ENCODE measurements at regions of chr11 and their contacts with region 1.

Region 1: DNA sequence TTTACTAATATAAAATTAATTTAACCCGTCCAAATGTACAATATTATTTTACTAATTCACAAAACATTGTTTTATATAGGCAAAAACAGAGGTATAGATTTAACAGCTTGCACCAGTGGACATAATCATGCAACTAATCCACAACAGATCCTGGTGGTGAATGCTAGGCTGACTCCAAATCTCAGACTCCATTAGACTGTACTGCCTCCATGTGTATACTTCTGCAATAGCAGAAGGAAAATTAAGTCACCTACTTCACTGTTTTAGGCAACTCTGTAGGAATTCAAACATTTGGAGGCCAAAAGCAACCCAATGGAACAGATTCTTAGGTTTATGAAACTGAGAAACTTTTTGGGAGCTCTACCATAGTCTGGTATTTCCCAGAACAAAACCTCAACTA is 30.0 kb upstream of the RAB39A start:
- DNase-seq: peak; percentile 14 to 26 (median 15)
- H3K4me3 ChIP-seq: no peak overlapping the region
- H3K4me3 Mint-ChIP-seq: no peak overlapping the region
- H3K27ac ChIP-seq: no peak overlapping the region
- H3K27ac Mint-ChIP-seq: no peak overlapping the region
- H3K4me1 ChIP-seq: no peaks in the 10 kb centered on the region
- H3K4me1 Mint-ChIP-seq: peaks cover 4% of the 10 kb centered on the region
- H3K27me3 ChIP-seq: no peaks in the 10 kb centered on the region
- H3K27me3 Mint-ChIP-seq: peaks cover 3 to 15% (median 5%) of the 10 kb centered on the region in 3 donors
- CTCF ChIP-seq: peak; percentile 61

Region 2: GRCh38 chr11:106344966-106345365 is 1553.3 kb before region 1 on chr11:
- intact Hi-C with region 1: no loop called
- DNase-seq: no peak
- H3K4me3 ChIP-seq: no peak overlapping the region
- H3K4me3 Mint-ChIP-seq: no peak overlapping the region
- H3K27ac ChIP-seq: no peak overlapping the region
- H3K27ac Mint-ChIP-seq: no peak overlapping the region
- H3K4me1 ChIP-seq: no peaks in the 10 kb centered on the region
- H3K4me1 Mint-ChIP-seq: no peaks in the 10 kb centered on the region
- H3K27me3 ChIP-seq: no peaks in the 10 kb centered on the region
- H3K27me3 Mint-ChIP-seq: no peaks in the 10 kb centered on the region
- CTCF ChIP-seq: no peak

Region 3: DNA sequence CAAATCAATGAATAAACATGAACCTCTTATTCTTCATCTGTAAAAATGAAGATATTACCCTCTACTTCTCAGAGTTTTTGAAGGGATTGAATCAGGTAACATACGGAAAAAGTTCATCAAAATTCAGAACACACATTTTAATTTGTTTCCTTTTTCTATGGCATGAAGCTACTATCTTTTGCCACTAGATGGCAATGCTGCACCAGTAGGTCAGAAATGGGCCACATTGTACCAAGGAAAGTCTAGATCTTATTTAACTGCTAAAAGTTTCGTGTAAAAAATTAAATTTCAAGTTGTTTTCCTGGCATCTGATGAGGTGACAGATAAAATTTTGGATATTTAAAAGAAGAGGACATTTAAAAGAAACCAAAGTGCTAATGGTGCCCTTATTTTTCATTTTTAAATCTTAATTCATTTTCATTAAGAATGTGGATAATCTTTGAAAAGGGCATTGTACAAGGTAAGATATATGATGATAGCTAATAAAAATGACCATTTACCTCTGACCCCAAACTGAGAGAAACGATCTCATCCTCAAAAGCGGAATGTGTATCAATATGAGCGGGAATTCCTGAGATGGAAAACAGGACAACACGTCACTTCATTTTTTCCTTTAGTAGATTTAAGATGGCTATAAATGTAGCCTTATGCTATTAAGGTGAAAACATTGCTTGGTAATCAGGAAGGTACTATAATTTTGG is 348.9 kb before region 1 on chr11:
- intact Hi-C with region 1: loop called in 1 of 2 experiments (anchors 10 kb)
- DNase-seq: peak; percentile 12 to 46 (median 31)
- H3K4me3 ChIP-seq: no peak overlapping the region
- H3K4me3 Mint-ChIP-seq: no peak overlapping the region
- H3K27ac ChIP-seq: no peak overlapping the region
- H3K27ac Mint-ChIP-seq: no peak overlapping the region
- H3K4me1 ChIP-seq: no peaks in the 10 kb centered on the region
- H3K4me1 Mint-ChIP-seq: no peaks in the 10 kb centered on the region
- H3K27me3 ChIP-seq: no peaks in the 10 kb centered on the region
- H3K27me3 Mint-ChIP-seq: peaks cover 0 to 3% (median 0%) of the 10 kb centered on the region in 3 donors
- CTCF ChIP-seq: peak; percentile 86

Region 4: GRCh38 chr11:107741044-107741823 is 157.0 kb before region 1 on chr11:
- intact Hi-C with region 1: loop called in 1 of 2 experiments (anchors 5 kb)
- DNase-seq: peak; percentile 3 to 32 (median 13)
- H3K4me3 ChIP-seq: no peak overlapping the region
- H3K4me3 Mint-ChIP-seq: no peak overlapping the region
- H3K27ac ChIP-seq: no peak overlapping the region
- H3K27ac Mint-ChIP-seq: peak overlapping the region in 1 of 7 donors; percentile 38
- H3K4me1 ChIP-seq: no peaks in the 10 kb centered on the region
- H3K4me1 Mint-ChIP-seq: no peaks in the 10 kb centered on the region
- H3K27me3 ChIP-seq: no peaks in the 10 kb centered on the region
- H3K27me3 Mint-ChIP-seq: peaks cover 7 to 16% (median 8%) of the 10 kb centered on the region in 3 donors
- CTCF ChIP-seq: peak; percentile 73

Region 5: DNA sequence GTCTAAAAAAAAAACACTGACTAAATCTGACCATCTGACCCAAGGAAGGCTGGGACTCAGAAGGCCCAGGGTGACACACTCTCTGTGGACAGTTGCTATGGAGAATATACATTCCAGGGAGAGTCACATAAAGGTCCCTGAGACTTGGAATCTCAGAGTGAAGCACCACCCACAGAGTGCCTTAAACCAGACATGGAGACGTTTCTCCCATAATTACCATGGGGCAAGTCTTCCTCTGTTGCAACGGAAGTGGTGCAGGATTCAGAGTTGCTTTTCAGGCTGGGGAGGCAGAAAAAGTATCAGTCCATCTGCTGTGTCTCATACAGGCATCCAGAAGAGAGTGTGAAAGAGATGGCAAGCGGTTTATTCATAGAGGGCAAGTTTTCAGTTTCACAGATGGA is 127.7 kb before region 1 on chr11:
- intact Hi-C with region 1: no loop called
- DNase-seq: no peak
- H3K4me3 ChIP-seq: no peak overlapping the region
- H3K4me3 Mint-ChIP-seq: no peak overlapping the region
- H3K27ac ChIP-seq: no peak overlapping the region
- H3K27ac Mint-ChIP-seq: no peak overlapping the region
- H3K4me1 ChIP-seq: no peaks in the 10 kb centered on the region
- H3K4me1 Mint-ChIP-seq: no peaks in the 10 kb centered on the region
- H3K27me3 ChIP-seq: no peaks in the 10 kb centered on the region
- H3K27me3 Mint-ChIP-seq: peaks cover 2 to 9% (median 2%) of the 10 kb centered on the region in 3 donors
- CTCF ChIP-seq: no peak

Region 6: DNA sequence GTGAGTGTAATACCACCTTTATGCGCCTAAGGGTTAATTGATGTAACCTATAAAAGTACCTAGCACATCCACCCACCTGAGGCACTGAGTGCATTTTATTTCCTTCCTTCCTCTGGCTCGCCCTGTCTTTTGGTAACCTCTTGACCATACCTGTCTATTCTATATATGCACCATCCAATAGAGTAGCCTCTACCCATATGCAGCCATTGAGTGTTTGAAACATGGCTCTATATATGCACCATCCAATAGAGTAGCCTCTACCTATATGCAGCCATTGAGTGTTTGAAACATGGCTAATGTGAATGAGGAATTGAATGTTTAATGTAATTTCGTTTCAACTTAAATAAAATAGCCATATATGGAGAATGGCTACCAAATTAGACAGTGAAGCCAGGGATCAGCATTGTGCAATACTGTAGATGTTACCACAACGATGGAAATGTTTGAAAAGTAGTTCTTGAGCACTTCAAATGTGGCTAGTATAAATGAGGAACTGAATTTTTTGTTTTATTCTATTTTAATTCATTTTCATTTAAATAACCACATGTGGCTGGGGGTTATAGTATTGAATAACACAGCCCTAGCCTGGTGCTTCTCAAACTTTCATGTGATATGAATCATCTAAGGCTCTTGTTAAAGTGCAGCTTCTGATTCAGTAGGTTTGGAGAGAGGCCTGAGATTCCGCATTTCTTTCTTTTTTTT is 73.5 kb before region 1 on chr11:
- intact Hi-C with region 1: no loop called
- DNase-seq: peak; percentile 28 to 59 (median 40)
- H3K4me3 ChIP-seq: peak overlapping the region in 1 of 3 experiments; percentile 3
- H3K4me3 Mint-ChIP-seq: no peak overlapping the region
- H3K27ac ChIP-seq: no peak overlapping the region
- H3K27ac Mint-ChIP-seq: peak overlapping the region in 1 of 7 donors; percentile 25
- H3K4me1 ChIP-seq: peaks cover 18% of the 10 kb centered on the region in 2 donors
- H3K4me1 Mint-ChIP-seq: peaks cover 25% of the 10 kb centered on the region
- H3K27me3 ChIP-seq: no peaks in the 10 kb centered on the region
- H3K27me3 Mint-ChIP-seq: peaks cover 0 to 2% (median 1%) of the 10 kb centered on the region in 3 donors
- CTCF ChIP-seq: no peak

Measured in CD14-positive monocyte (primary cell).